Heart right ventricle (tissue), 16 donors: ENCODE measurements at regions of chr21 and their contacts with region 1.

Region 1: GRCh38 chr21:17402937-17403336 is 109.9 kb upstream of the CXADR start:
- DNase-seq: no peak
- ATAC-seq: peak in 1 of 8 donors; percentile 42
- H3K4me3 ChIP-seq: no peak overlapping the region
- H3K27ac ChIP-seq: no peak overlapping the region
- H3K4me1 ChIP-seq: peaks cover 0 to 8% (median 0%) of the 10 kb centered on the region in 9 donors
- H3K27me3 ChIP-seq: no peaks in the 10 kb centered on the region
- CTCF ChIP-seq: no peak

Region 2: GRCh38 chr21:17576080-17576835 is 173.3 kb after region 1 on chr21:
- intact Hi-C with region 1: loop called in 2 of 10 experiments (anchors 5 to 10 kb)
- DNase-seq: no peak
- ATAC-seq: no peak
- H3K4me3 ChIP-seq: no peak overlapping the region
- H3K27ac ChIP-seq: no peak overlapping the region
- H3K4me1 ChIP-seq: peaks cover 0 to 8% (median 0%) of the 10 kb centered on the region in 9 donors
- H3K27me3 ChIP-seq: no peaks in the 10 kb centered on the region
- CTCF ChIP-seq: no peak

Region 3: GRCh38 chr21:17585875-17586450 is 183.0 kb after region 1 on chr21:
- intact Hi-C with region 1: loop called in 1 of 10 experiments (anchors 5 kb)
- DNase-seq: peak in 1 of 2 donors; percentile 11
- ATAC-seq: no peak
- H3K4me3 ChIP-seq: no peak overlapping the region
- H3K27ac ChIP-seq: no peak overlapping the region
- H3K4me1 ChIP-seq: peaks cover 0 to 3% (median 0%) of the 10 kb centered on the region in 9 donors
- H3K27me3 ChIP-seq: no peaks in the 10 kb centered on the region
- CTCF ChIP-seq: peak; percentile 11 to 77 (median 68)